CD4-positive, alpha-beta memory T cell (primary cell): ENCODE measurements at regions of chr5 and their contacts with region 1.

Region 1: GRCh38 chr5:9544502-9545135 is 1.3 kb downstream of the SEMA5A start:
- DNase-seq: peak; percentile 13 to 48 (median 31)
- H3K4me3 ChIP-seq: peak overlapping the region in 1 of 2 donors; percentile 19
- H3K4me3 Mint-ChIP-seq: peak overlapping the region; percentile 72 to 88 (median 82)
- H3K27ac ChIP-seq: no peak overlapping the region
- H3K27ac Mint-ChIP-seq: peak overlapping the region in 3 of 7 donors; percentile 54 to 76 (median 55)
- H3K4me1 ChIP-seq: peaks cover 8% of the 10 kb centered on the region
- H3K4me1 Mint-ChIP-seq: peaks cover 4 to 17% (median 10%) of the 10 kb centered on the region in 4 donors
- H3K27me3 ChIP-seq: no peaks in the 10 kb centered on the region
- H3K27me3 Mint-ChIP-seq: peaks cover 9 to 10% of the 10 kb centered on the region in 2 donors

Region 2: DNA sequence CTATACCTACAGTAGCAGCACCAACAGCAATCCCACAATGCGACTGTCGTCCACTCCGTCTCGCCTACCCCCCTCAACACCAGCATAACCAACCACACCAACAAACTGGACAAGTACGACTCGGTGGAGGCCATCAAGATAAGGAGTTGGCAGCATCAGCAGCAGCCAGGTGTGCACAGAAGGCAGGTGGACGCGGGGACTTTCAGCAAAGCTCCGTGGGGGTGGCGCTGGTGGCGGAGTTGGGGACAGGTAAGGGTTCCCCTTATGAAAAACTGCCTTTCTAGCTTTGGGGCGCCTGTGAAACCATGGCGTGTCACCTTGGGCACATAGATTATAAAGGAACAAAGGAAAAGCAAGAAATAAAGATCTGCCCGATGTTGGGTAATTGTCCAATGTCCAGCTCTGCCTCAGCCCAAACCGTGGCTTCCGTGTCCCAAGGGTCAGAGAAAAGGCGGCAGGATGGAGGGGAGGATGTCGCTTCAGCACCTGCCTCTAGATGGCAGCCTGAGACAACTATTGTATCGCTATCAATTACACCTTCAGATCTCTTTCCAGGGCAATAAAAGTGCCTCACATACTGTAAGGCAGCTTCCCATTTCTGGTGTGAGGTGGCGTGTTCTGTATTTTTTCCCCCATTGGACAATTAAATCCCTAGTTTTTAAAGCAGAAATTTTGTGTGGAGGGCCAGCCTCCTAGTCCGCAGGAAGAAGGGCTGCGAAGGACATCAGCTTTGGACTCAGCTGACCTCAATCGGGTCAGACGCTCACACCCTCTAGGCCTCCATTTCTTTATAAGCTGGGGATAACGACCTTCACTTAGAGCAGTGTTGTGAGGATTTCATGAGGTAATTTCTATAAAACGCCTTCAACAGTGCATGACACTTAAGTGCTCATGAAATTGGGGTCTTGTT is 1616.9 kb before region 1 on chr5:
- CTCF ChIA-PET with region 1: interaction called, 3 read pairs
- POLR2A ChIA-PET with region 1: no interaction called
- intact Hi-C with region 1: loop called (anchors 2 kb)
- DNase-seq: peak in 4 of 5 donors; percentile 13 to 25 (median 18)
- H3K4me3 ChIP-seq: no peak overlapping the region
- H3K4me3 Mint-ChIP-seq: no peak overlapping the region
- H3K27ac ChIP-seq: no peak overlapping the region
- H3K27ac Mint-ChIP-seq: no peak overlapping the region
- H3K4me1 ChIP-seq: no peaks in the 10 kb centered on the region
- H3K4me1 Mint-ChIP-seq: peaks cover 0 to 5% (median 2%) of the 10 kb centered on the region in 4 donors
- H3K27me3 ChIP-seq: no peaks in the 10 kb centered on the region
- H3K27me3 Mint-ChIP-seq: peaks cover 5 to 15% of the 10 kb centered on the region in 2 donors

Region 3: GRCh38 chr5:9361835-9362234 is 182.8 kb before region 1 on chr5:
- CTCF ChIA-PET with region 1: interaction called, 3 read pairs
- POLR2A ChIA-PET with region 1: interaction called, 4 read pairs
- intact Hi-C with region 1: loop called (anchors 1 kb)
- DNase-seq: peak; percentile 32 to 65 (median 34)
- H3K4me3 ChIP-seq: no peak overlapping the region
- H3K4me3 Mint-ChIP-seq: peak overlapping the region in 2 of 8 donors; percentile 22 to 44
- H3K27ac ChIP-seq: no peak overlapping the region
- H3K27ac Mint-ChIP-seq: peak overlapping the region in 3 of 7 donors; percentile 10 to 56 (median 48)
- H3K4me1 ChIP-seq: peaks cover 9% of the 10 kb centered on the region
- H3K4me1 Mint-ChIP-seq: peaks cover 8 to 30% (median 15%) of the 10 kb centered on the region in 4 donors
- H3K27me3 ChIP-seq: no peaks in the 10 kb centered on the region
- H3K27me3 Mint-ChIP-seq: no peaks in the 10 kb centered on the region

Region 4: GRCh38 chr5:9405196-9405754 is 139.3 kb before region 1 on chr5:
- CTCF ChIA-PET with region 1: no interaction called
- POLR2A ChIA-PET with region 1: no interaction called
- intact Hi-C with region 1: no loop called
- DNase-seq: no peak
- H3K4me3 ChIP-seq: no peak overlapping the region
- H3K4me3 Mint-ChIP-seq: no peak overlapping the region
- H3K27ac ChIP-seq: no peak overlapping the region
- H3K27ac Mint-ChIP-seq: no peak overlapping the region
- H3K4me1 ChIP-seq: no peaks in the 10 kb centered on the region
- H3K4me1 Mint-ChIP-seq: no peaks in the 10 kb centered on the region
- H3K27me3 ChIP-seq: no peaks in the 10 kb centered on the region
- H3K27me3 Mint-ChIP-seq: no peaks in the 10 kb centered on the region

Region 5: DNA sequence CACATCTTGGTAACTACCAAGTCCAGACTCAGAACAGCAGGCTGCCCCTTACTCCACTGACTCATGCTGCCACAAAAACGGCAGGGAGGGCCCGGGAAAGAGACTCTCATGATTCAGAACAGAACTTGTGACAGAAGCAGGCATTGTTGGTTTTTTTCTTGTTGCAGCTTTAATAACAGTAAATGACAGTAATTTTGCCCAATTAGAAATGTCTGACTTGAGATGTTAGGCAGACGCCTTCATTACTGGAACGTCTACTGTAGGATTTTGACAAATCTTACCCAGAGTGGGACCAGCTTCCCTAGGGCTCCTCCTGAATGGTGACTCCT is 76.6 kb before region 1 on chr5:
- CTCF ChIA-PET with region 1: no interaction called
- POLR2A ChIA-PET with region 1: no interaction called
- intact Hi-C with region 1: no loop called
- DNase-seq: no peak
- H3K4me3 ChIP-seq: no peak overlapping the region
- H3K4me3 Mint-ChIP-seq: no peak overlapping the region
- H3K27ac ChIP-seq: no peak overlapping the region
- H3K27ac Mint-ChIP-seq: no peak overlapping the region
- H3K4me1 ChIP-seq: no peaks in the 10 kb centered on the region
- H3K4me1 Mint-ChIP-seq: no peaks in the 10 kb centered on the region
- H3K27me3 ChIP-seq: no peaks in the 10 kb centered on the region
- H3K27me3 Mint-ChIP-seq: no peaks in the 10 kb centered on the region